AG04449 (cell line): ENCODE measurements at regions of chr2 and their contacts with region 1.

Region 1: DNA sequence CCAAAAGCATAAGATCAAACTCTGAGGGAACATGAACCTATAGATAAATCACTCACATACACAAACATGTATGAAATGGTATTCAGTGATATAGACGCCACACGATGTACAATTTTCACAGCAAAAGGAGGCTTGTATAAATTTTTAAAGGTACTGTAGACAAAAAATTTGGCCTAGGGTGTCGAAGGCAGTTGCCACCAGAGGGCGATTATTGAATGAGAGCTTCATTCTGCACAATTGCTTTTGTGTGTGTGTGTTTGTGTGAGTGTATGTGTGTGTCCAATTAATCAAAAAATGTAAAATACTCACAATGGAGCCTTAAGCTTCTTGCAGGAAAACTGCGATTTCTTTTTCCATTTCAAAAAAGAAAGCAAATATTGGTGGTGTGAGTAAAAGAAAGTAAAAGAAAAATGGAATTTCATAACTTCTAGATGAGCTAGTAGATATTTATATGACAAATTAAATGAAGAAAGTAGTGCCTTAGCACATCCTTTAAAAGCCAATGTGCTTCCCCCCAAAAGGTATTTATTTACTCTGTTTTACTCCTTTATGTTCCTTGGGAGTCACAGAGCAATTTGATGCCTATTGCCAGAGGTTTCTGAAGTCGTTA is 800.1 kb downstream of the SATB2 start:
- DNase-seq: no peak
- H3K4me3 ChIP-seq: no peak overlapping the region
- CTCF ChIP-seq: peak; percentile 47

Region 2: GRCh38 chr2:198639580-198639979 is 18.0 kb before region 1 on chr2:
- CTCF ChIA-PET with region 1: interaction called, 20 read pairs
- POLR2A ChIA-PET with region 1: no interaction called
- DNase-seq: no peak
- H3K4me3 ChIP-seq: no peak overlapping the region
- CTCF ChIP-seq: no peak

Region 3: GRCh38 chr2:198645816-198646215 is 11.8 kb before region 1 on chr2:
- CTCF ChIA-PET with region 1: interaction called, 20 read pairs
- POLR2A ChIA-PET with region 1: no interaction called
- DNase-seq: no peak
- H3K4me3 ChIP-seq: no peak overlapping the region
- CTCF ChIP-seq: no peak